ENCODE measurements at regions of chr4 and their contacts with region 1.

Region 1: DNA sequence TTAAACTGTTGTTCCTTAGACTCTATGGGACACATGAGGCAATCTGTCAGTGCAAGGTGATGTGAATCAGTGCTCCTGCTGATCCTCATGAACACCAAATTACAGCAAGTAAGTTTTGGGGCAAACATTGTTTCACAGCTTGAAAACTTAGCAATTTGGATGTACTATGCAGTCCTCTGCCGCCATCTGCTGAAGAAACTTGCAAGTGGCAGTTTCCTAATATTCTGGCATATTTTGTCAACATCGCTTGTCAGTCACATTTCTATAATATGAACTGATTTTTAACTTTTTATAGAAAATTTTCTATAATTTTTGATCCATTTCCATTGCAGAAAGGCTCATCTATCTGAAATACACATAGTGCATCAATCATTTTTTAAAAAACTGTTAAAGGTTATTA is 56.3 kb downstream of the ZAR1 start:
- DNase-seq: peak; percentile 52
- ATAC-seq: peak; percentile 61; the same call in 1 of the 2 replicates
- H3K4me3 ChIP-seq: no peak overlapping the region
- H3K27ac ChIP-seq: no peak overlapping the region
- H3K4me1 ChIP-seq: no peaks in the 10 kb centered on the region
- H3K27me3 ChIP-seq: no peaks in the 10 kb centered on the region
- CTCF ChIP-seq: peak; percentile 75
- POLR2A ChIP-seq: no peak
- RAD21 ChIP-seq: peak; percentile 75

Region 2: GRCh38 chr4:48127682-48128394 is 418.5 kb before region 1 on chr4:
- CTCF ChIA-PET with region 1: interaction called, 3 read pairs
- POLR2A ChIA-PET with region 1: no interaction called
- dilution Hi-C with region 1: no loop called
- in situ Hi-C with region 1: loop called (anchors 10 kb)
- intact Hi-C with region 1: loop called (anchors 5 kb)
- DNase-seq: peak; percentile 94
- ATAC-seq: peak; percentile 87
- H3K4me3 ChIP-seq: no peak overlapping the region
- H3K27ac ChIP-seq: peak overlapping the region; percentile 5; the same call in 1 of the 2 replicates
- H3K4me1 ChIP-seq: peaks cover 1% of the 10 kb centered on the region; the same call in 1 of the 2 replicates
- H3K27me3 ChIP-seq: peaks cover under 1% of the 10 kb centered on the region; the same call in 1 of the 2 replicates
- CTCF ChIP-seq: peak; percentile 55
- POLR2A ChIP-seq: no peak
- RAD21 ChIP-seq: peak; percentile 59

Region 3: GRCh38 chr4:48141048-48141447 is 405.3 kb before region 1 on chr4:
- CTCF ChIA-PET with region 1: no interaction called
- POLR2A ChIA-PET with region 1: no interaction called
- dilution Hi-C with region 1: no loop called
- in situ Hi-C with region 1: loop called (anchors 10 kb)
- intact Hi-C with region 1: loop called (anchors 5 kb)
- DNase-seq: peak; percentile 56
- ATAC-seq: peak; percentile 84
- H3K4me3 ChIP-seq: no peak overlapping the region
- H3K27ac ChIP-seq: no peak overlapping the region
- H3K4me1 ChIP-seq: no peaks in the 10 kb centered on the region
- H3K27me3 ChIP-seq: no peaks in the 10 kb centered on the region
- CTCF ChIP-seq: peak; percentile 65
- POLR2A ChIP-seq: no peak
- RAD21 ChIP-seq: peak; percentile 63

Region 4: GRCh38 chr4:48315728-48316630 is 230.4 kb before region 1 on chr4:
- CTCF ChIA-PET with region 1: interaction called, 3 read pairs
- POLR2A ChIA-PET with region 1: no interaction called
- dilution Hi-C with region 1: no loop called
- in situ Hi-C with region 1: loop called (anchors 5 kb)
- intact Hi-C with region 1: loop called (anchors 1 kb)
- DNase-seq: peak; percentile 73
- ATAC-seq: peak; percentile 89
- H3K4me3 ChIP-seq: no peak overlapping the region
- H3K27ac ChIP-seq: no peak overlapping the region
- H3K4me1 ChIP-seq: no peaks in the 10 kb centered on the region
- H3K27me3 ChIP-seq: no peaks in the 10 kb centered on the region
- CTCF ChIP-seq: peak; percentile 67
- POLR2A ChIP-seq: no peak
- RAD21 ChIP-seq: peak; percentile 74

Region 5: DNA sequence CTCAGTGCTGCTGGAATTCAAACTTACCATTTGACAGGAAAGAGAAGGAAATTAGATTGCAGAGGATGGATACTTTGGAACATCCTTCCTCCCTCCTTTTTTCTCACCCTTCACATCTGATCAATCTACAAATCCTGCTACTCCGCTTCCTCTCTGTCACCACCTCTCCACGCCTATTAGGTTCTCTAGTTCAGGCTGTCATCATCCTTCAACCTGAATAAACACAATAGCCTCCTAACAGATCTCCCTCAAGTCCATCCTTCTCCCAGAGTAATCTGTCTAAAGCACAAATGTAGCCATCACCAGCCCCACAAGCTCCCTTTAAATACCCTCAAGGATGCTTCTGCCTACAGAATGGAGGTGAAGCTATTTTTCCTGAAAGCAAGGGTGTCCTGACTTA is 225.0 kb before region 1 on chr4:
- CTCF ChIA-PET with region 1: no interaction called
- POLR2A ChIA-PET with region 1: no interaction called
- dilution Hi-C with region 1: no loop called
- in situ Hi-C with region 1: loop called (anchors 5 kb)
- intact Hi-C with region 1: loop called (anchors 1 kb)
- DNase-seq: no peak
- ATAC-seq: no peak
- H3K4me3 ChIP-seq: no peak overlapping the region
- H3K27ac ChIP-seq: no peak overlapping the region
- H3K4me1 ChIP-seq: 0 out of 2 replicates have a peak, but pooled peaks cover 2% of the 10 kb centered on the region
- H3K27me3 ChIP-seq: no peaks in the 10 kb centered on the region
- CTCF ChIP-seq: no peak
- POLR2A ChIP-seq: no peak
- RAD21 ChIP-seq: no peak

Region 6: DNA sequence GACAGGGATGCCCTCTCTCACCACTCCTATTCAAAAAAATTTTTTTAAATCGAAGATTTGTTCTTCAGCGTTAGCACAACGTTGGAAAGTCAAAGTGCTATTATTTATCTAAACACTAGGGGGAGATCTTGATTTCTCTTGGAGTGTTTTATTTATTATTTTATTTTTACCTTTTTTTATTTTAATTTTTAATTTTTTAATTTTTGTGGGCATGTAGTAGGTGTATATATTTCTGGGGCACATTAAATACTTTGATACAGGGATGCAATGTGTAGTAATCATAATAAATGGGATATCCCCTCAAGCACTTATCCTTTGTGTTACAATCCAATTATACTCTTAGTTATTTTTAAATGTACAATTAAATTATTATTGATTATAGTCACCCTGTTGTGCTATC is 100.6 kb before region 1 on chr4:
- CTCF ChIA-PET with region 1: no interaction called
- POLR2A ChIA-PET with region 1: no interaction called
- dilution Hi-C with region 1: no loop called
- in situ Hi-C with region 1: no loop called
- intact Hi-C with region 1: loop called (anchors 1 kb)
- DNase-seq: peak; percentile 12
- ATAC-seq: peak; percentile 59
- H3K4me3 ChIP-seq: no peak overlapping the region
- H3K27ac ChIP-seq: no peak overlapping the region
- H3K4me1 ChIP-seq: no peaks in the 10 kb centered on the region
- H3K27me3 ChIP-seq: peaks cover 4% of the 10 kb centered on the region
- CTCF ChIP-seq: peak; percentile 47
- POLR2A ChIP-seq: no peak
- RAD21 ChIP-seq: peak; percentile 42